HCT116 (cell line): ENCODE measurements at regions of chr4 and their contacts with region 1.

Region 1: GRCh38 chr4:184983672-184984356 is 34.5 kb upstream of the HELT start:
- DNase-seq: peak; percentile 67
- ATAC-seq: peak; percentile 98
- H3K4me3 ChIP-seq: no peak overlapping the region
- H3K27ac ChIP-seq: no peak overlapping the region
- H3K4me1 ChIP-seq: peaks cover 6 to 9% of the 10 kb centered on the region in 2 experiments; a peak in 2 of 4 replicates
- H3K27me3 ChIP-seq: no peaks in the 10 kb centered on the region
- CTCF ChIP-seq: peak; percentile 41 to 57 (median 47); a peak in 4 of 6 replicates
- POLR2A ChIP-seq: no peak
- RAD21 ChIP-seq: peak; percentile 84

Region 2: GRCh38 chr4:184745831-184746795 is 237.7 kb before region 1 on chr4:
- CTCF ChIA-PET with region 1: interaction called, 3 read pairs
- POLR2A ChIA-PET with region 1: no interaction called
- RAD21 ChIA-PET with region 1: interaction called, 3 to 4 read pairs
- intact Hi-C with region 1: loop called (anchors 1 kb)
- DNase-seq: peak; percentile 29
- ATAC-seq: peak; percentile 79
- H3K4me3 ChIP-seq: no peak overlapping the region
- H3K27ac ChIP-seq: no peak overlapping the region
- H3K4me1 ChIP-seq: peaks cover 0 to 9% of the 10 kb centered on the region in 2 experiments; a peak in 1 of 4 replicates
- H3K27me3 ChIP-seq: no peaks in the 10 kb centered on the region
- CTCF ChIP-seq: peak; percentile 57 to 66 (median 57)
- POLR2A ChIP-seq: no peak
- RAD21 ChIP-seq: peak; percentile 80

Region 3: GRCh38 chr4:184968784-184969201 is 15.0 kb before region 1 on chr4:
- CTCF ChIA-PET with region 1: no interaction called
- POLR2A ChIA-PET with region 1: no interaction called
- RAD21 ChIA-PET with region 1: no interaction called
- intact Hi-C with region 1: no loop called
- DNase-seq: no peak
- ATAC-seq: peak; percentile 99
- H3K4me3 ChIP-seq: no peak overlapping the region
- H3K27ac ChIP-seq: no peak overlapping the region
- H3K4me1 ChIP-seq: peaks cover 9 to 12% of the 10 kb centered on the region in 2 experiments; a peak in 3 of 4 replicates
- H3K27me3 ChIP-seq: no peaks in the 10 kb centered on the region
- CTCF ChIP-seq: no peak
- POLR2A ChIP-seq: no peak
- RAD21 ChIP-seq: no peak